Activated T-helper 2 cell treated with anti-CD3 and anti-CD28 coated beads, Interferon-gamma antibody, Interleukin-2, Interleukin-4, amounts not matched to agents 10 μg/mL and 5 μg/mL and 100 μg/mL, durations not matched to agents 14 hours and 24 hours and 36 hours (primary cell): ENCODE measurements at regions of chr10 and their contacts with region 1.

Region 1: DNA sequence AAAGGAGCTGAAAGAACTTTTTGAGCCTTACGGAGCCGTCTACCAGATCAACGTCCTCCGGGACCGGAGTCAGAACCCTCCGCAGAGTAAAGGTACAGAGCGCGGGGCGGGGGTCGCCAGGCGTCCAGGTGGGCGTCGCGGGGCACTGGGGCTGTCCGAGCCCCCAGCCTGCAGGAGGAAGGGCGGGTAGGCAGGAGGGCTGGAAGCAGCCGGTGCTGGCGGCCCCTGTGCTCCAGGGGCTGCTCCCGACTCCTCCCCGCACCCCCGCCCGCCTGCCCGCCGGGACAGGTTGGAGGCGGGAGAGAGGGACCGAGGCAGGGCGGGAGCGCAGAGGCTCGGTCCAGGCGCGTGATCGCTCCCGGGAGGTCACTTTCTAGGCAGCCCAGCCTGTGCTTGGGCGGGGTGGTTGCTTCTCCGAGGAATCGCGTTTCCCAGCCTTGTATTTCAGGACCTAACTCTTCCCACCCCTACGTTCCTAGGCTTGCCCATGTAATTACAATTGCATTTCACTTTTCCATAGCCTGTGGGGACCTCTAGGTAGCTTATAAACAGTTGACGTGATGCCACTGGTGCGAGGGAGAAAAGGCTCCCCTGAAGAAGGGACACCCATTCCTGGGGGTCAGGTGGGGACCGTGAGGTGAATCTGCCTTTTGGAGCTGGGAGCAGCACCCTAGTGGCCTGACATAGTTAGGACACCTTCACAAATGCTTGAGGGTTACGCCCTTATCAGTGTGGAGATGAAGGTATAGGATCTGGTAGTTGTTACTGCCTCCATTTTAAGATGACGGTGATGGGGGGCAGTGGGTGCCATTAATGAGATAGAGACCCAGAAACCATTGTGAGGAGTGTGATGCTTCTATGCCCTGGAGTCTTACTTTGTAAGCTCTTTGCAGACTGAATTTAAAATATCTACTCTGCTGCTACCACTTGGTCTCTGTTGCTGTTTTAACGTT is 148.2 kb downstream of the CELF2 start:
- DNase-seq: peak; percentile 73
- H3K4me3 Mint-ChIP-seq: peak overlapping the region; percentile 98
- H3K27ac Mint-ChIP-seq: peak overlapping the region; percentile 98
- H3K4me1 Mint-ChIP-seq: peaks cover 37% of the 10 kb centered on the region
- H3K27me3 Mint-ChIP-seq: no peaks in the 10 kb centered on the region

Region 2: DNA sequence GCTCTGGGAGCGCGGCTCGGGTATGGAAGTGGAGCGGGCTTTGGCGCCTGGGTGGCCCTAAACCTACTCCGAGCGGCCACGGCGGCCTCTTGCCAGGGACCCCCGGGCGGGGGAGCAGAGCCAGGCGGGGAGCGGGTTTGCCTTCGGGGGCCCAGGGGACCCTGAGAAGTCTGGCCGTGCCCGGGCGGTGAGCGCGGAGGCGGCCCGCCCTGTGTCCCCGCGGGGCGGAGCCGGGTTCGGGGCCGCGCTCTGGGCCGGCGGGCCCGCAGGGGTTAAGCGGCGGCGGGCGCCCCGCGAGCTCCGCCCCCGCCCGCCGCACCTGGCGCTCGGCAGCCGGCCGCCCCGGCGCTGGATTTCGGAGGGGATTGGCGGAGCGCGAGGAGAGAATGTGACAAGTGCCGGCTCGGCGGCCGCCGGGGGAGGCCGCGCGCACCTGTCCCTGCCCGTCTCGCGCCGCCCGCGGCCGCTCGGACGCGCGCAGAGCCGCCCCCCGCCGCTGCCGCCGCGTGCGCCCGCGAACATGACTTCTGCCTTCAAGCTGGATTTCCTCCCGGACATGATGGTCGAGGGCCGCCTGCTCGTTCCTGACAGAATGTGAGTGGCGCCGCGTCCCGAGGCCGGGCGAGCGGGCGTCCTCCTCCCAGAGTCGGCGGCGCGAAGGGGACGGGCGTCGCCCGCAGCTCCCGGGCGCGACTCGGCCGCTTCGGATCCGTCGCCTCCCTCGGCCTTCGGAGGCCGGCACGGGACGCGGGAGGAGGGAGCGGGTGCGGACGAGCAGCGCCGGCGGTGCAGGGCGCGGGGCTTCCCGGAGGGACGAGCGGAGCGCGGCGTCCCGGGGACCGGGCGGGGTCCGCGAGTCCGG is 148.1 kb before region 1 on chr10 and contains the start of gene CELF2:
- intact Hi-C with region 1: loop called (anchors 5 kb)
- DNase-seq: peak; percentile 31
- H3K4me3 Mint-ChIP-seq: peak within 1 kb of the TSS; percentile 57
- H3K27ac Mint-ChIP-seq: no peak within 1 kb of the TSS
- H3K4me1 Mint-ChIP-seq: peaks cover 7% of the 10 kb centered on the region
- H3K27me3 Mint-ChIP-seq: peaks cover 82% of the 10 kb centered on the region
- total RNA-seq, gene CELF2: 131 and 134 TPM in 2 replicates

Region 3: GRCh38 chr10:11113156-11113555 is 52.7 kb before region 1 on chr10:
- intact Hi-C with region 1: loop called (anchors 1 kb)
- DNase-seq: no peak
- H3K4me3 Mint-ChIP-seq: no peak overlapping the region
- H3K27ac Mint-ChIP-seq: no peak overlapping the region
- H3K4me1 Mint-ChIP-seq: peaks cover 12% of the 10 kb centered on the region
- H3K27me3 Mint-ChIP-seq: peaks cover 6% of the 10 kb centered on the region

Region 4: DNA sequence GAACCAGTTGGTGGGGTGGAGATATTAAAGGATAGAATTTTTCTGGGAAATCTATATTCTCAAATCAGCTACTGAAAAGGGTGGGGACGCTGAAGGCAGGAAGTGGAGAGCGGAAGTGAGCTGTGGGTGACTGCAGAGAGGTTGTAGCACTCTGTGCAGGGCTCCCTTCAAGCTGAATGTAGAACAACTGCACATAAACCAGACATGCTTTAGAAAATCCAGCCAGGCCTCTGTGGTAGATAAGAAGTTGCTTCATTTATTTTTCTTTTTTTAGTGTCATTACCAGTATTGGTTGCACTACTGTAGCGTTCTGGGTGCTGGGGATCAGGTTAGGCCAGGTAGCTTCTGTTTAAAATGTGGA is 20.4 kb before region 1 on chr10:
- intact Hi-C with region 1: loop called (anchors 1 kb)
- DNase-seq: peak; percentile 69
- H3K4me3 Mint-ChIP-seq: peak overlapping the region; percentile 77
- H3K27ac Mint-ChIP-seq: peak overlapping the region; percentile 98
- H3K4me1 Mint-ChIP-seq: peaks cover 90% of the 10 kb centered on the region
- H3K27me3 Mint-ChIP-seq: no peaks in the 10 kb centered on the region

Region 5: GRCh38 chr10:11154333-11154732 is 11.5 kb before region 1 on chr10:
- intact Hi-C with region 1: loop called (anchors 1 kb)
- DNase-seq: no peak
- H3K4me3 Mint-ChIP-seq: no peak overlapping the region
- H3K27ac Mint-ChIP-seq: peak overlapping the region; percentile 2
- H3K4me1 Mint-ChIP-seq: peaks cover 64% of the 10 kb centered on the region
- H3K27me3 Mint-ChIP-seq: no peaks in the 10 kb centered on the region